ENCODE measurements at regions of chr17 and their contacts with region 1.

Region 1: GRCh38 chr17:63406689-63407330 is 39.3 kb downstream of the CYB561 start:
- DNase-seq: peak; percentile 88 to 92 (median 88)
- H3K4me3 ChIP-seq: no peak overlapping the region
- H3K27ac ChIP-seq: no peak overlapping the region
- H3K4me1 ChIP-seq: peaks cover 0 to 5% (median 2%) of the 10 kb centered on the region in 4 experiments
- H3K27me3 ChIP-seq: no peaks in the 10 kb centered on the region

Region 2: DNA sequence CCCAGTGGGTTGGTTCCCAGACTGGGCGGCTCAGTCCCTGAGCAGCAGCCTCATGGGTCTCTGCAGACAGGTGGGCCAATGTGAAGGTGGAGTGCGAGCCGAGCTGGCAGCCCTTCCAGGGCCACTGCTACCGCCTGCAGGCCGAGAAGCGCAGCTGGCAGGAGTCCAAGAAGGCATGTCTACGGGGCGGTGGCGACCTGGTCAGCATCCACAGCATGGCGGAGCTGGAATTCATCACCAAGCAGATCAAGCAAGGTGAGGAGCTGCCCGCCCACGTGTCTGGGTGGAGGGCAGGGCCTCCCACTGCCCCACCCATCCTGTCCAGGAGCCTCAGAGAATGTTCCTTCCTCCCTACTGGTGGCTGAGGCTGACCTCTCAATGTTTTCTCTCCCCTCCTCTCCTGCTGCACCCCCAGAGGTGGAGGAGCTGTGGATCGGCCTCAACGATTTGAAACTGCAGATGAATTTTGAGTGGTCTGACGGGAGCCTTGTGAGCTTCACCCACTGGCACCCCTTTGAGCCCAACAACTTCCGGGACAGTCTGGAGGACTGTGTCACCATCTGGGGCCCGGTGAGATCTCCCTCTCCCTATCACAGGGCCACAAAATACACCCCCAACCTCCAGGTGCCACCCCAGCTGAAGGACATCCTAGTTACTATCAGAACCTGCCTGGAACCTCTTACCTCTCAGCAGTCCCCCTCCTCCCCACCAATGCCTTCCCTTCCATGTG is 735.1 kb before region 1 on chr17:
- CTCF ChIA-PET with region 1: interaction called, 14 read pairs
- POLR2A ChIA-PET with region 1: no interaction called
- DNase-seq: no peak
- H3K4me3 ChIP-seq: no peak overlapping the region
- H3K27ac ChIP-seq: no peak overlapping the region
- H3K4me1 ChIP-seq: no peaks in the 10 kb centered on the region
- H3K27me3 ChIP-seq: no peaks in the 10 kb centered on the region

Region 3: GRCh38 chr17:63113183-63113582 is 293.6 kb before region 1 on chr17:
- CTCF ChIA-PET with region 1: interaction called, 11 read pairs
- POLR2A ChIA-PET with region 1: no interaction called
- DNase-seq: peak in 2 of 3 donors; percentile 34 to 35
- H3K4me3 ChIP-seq: no peak overlapping the region
- H3K27ac ChIP-seq: no peak overlapping the region
- H3K4me1 ChIP-seq: no peaks in the 10 kb centered on the region
- H3K27me3 ChIP-seq: no peaks in the 10 kb centered on the region

Region 4: GRCh38 chr17:63309021-63309420 is 97.8 kb before region 1 on chr17:
- CTCF ChIA-PET with region 1: no interaction called
- POLR2A ChIA-PET with region 1: no interaction called
- DNase-seq: peak in 2 of 3 donors; percentile 37 to 60
- H3K4me3 ChIP-seq: no peak overlapping the region
- H3K27ac ChIP-seq: no peak overlapping the region
- H3K4me1 ChIP-seq: peaks cover 0 to 2% (median 0%) of the 10 kb centered on the region in 4 experiments
- H3K27me3 ChIP-seq: no peaks in the 10 kb centered on the region

Region 5: GRCh38 chr17:63337579-63337978 is 69.2 kb before region 1 on chr17:
- CTCF ChIA-PET with region 1: no interaction called
- POLR2A ChIA-PET with region 1: no interaction called
- DNase-seq: no peak
- H3K4me3 ChIP-seq: no peak overlapping the region
- H3K27ac ChIP-seq: no peak overlapping the region
- H3K4me1 ChIP-seq: peaks cover 0 to 2% (median under 1%) of the 10 kb centered on the region in 4 experiments
- H3K27me3 ChIP-seq: no peaks in the 10 kb centered on the region

Region 6: DNA sequence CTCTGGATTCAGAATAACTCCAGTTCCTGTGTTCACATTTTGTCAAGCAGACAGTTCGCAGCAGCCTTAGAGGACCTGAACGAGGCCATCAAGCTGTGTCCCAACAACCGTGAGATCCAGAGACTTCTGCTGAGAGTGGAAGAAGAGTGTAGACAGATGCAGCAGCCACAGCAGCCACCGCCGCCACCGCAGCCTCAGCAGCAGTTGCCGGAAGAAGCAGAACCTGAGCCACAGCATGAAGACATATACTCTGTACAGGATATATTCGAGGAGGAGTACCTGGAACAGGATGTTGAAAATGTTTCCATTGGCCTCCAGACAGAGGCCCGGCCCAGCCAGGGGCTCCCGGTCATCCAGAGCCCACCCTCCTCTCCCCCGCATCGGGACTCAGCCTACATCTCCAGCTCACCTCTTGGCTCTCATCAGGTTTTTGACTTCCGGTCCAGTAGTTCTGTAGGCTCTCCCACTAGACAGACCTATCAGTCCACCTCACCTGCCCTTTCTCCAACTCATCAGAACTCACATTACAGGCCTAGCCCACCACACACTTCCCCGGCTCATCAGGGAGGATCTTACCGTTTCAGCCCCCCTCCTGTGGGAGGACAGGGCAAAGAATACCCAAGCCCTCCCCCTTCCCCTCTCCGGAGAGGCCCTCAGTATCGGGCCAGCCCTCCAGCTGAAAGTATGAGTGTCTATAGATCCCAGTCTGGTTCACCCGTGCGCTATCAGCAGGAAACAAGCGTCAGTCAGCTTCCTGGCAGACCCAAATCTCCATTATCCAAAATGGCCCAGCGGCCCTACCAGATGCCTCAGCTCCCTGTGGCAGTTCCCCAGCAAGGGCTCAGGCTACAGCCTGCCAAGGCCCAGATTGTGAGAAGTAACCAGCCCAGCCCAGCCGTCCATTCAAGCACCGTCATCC is 13.4 kb after region 1 on chr17:
- CTCF ChIA-PET with region 1: interaction called, 76 read pairs
- POLR2A ChIA-PET with region 1: interaction called, 4 read pairs
- DNase-seq: peak; percentile 98 to 100 (median 99)
- H3K4me3 ChIP-seq: peak overlapping the region in 4 of 7 experiments; percentile 7 to 42 (median 24)
- H3K27ac ChIP-seq: peak overlapping the region; percentile 25 to 74
- H3K4me1 ChIP-seq: peaks cover 12 to 65% (median 56%) of the 10 kb centered on the region in 4 experiments
- H3K27me3 ChIP-seq: no peaks in the 10 kb centered on the region

Region 7: GRCh38 chr17:63434876-63435684 is 28.3 kb after region 1 on chr17:
- CTCF ChIA-PET with region 1: interaction called, 19 read pairs
- POLR2A ChIA-PET with region 1: no interaction called
- DNase-seq: peak; percentile 73 to 89 (median 86)
- H3K4me3 ChIP-seq: peak overlapping the region in 5 of 7 experiments; percentile 4 to 54 (median 43)
- H3K27ac ChIP-seq: no peak overlapping the region
- H3K4me1 ChIP-seq: peaks cover 10 to 88% (median 86%) of the 10 kb centered on the region in 4 experiments
- H3K27me3 ChIP-seq: no peaks in the 10 kb centered on the region

Region 8: GRCh38 chr17:63611354-63611753 is 204.5 kb after region 1 on chr17:
- CTCF ChIA-PET with region 1: interaction called, 10 read pairs
- POLR2A ChIA-PET with region 1: no interaction called
- DNase-seq: no peak
- H3K4me3 ChIP-seq: no peak overlapping the region
- H3K27ac ChIP-seq: no peak overlapping the region
- H3K4me1 ChIP-seq: peaks cover 0 to 1% (median 0%) of the 10 kb centered on the region in 4 experiments
- H3K27me3 ChIP-seq: no peaks in the 10 kb centered on the region